Endothelial cell of umbilical vein (primary cell): ENCODE measurements at regions of chr7 and their contacts with region 1.

Region 1: GRCh38 chr7:7103343-7104313 is 78.7 kb upstream of the C1GALT1 start:
- DNase-seq: peak; percentile 70
- H3K4me3 ChIP-seq: peak overlapping the region in 1 of 3 experiments; percentile 8
- H3K27ac ChIP-seq: no peak overlapping the region
- H3K4me1 ChIP-seq: peaks cover 15% of the 10 kb centered on the region
- H3K27me3 ChIP-seq: no peaks in the 10 kb centered on the region
- CTCF ChIP-seq: peak; percentile 45 to 49
- POLR2A ChIP-seq: no peak

Region 2: DNA sequence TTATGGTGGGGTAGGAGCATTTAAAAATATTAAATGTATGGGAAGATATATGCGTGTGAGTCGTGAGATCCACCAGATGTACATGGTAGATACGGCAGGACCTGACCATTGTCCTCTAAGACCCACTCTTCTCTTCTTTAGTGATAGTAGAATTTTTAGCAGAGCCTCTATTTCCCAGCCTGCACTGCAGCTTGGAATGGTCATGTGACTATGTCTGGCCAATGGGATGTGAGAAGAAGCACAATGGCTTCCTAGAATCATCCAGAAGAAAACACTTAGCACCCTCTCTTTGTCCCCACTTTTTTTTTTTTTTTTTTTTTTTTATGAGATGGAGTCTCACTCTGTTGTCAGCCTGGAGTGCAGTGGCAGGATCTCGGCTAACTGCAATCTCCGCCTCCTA is 744.6 kb before region 1 on chr7:
- CTCF ChIA-PET with region 1: no interaction called
- POLR2A ChIA-PET with region 1: no interaction called
- dilution Hi-C with region 1: no loop called
- intact Hi-C with region 1: no loop called
- DNase-seq: no peak
- H3K4me3 ChIP-seq: no peak overlapping the region
- H3K27ac ChIP-seq: no peak overlapping the region
- H3K4me1 ChIP-seq: no peaks in the 10 kb centered on the region
- H3K27me3 ChIP-seq: no peaks in the 10 kb centered on the region
- CTCF ChIP-seq: no peak
- POLR2A ChIP-seq: no peak

Region 3: DNA sequence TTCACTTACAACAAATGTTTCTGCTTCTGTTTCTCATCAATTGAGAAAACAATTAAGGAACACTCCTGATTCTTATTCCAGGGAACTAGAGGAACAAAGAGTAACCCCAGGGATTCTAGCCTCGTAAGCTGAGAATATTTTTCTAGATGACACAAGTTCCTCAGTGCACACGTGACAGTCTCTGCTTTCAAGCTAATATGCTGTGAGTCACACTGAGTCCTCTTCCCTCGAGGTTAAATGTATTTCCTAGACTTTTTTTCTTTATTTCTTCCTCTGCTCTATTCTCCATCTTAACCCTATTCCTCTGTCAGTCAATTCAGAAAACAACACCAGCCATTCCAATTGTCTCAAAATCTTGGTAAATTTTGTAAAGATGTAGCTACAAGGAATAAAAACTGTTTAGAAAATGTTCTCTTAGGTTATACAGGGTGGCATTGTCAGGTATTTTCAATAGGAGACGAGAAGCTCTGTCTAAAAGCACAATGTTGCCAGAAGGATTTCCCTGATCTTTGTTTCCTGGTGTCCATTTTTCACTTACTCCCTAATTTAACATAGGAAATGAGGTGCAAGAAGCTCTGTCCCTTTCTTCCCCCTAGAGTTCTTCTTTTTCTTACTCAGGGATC is 72.9 kb after region 1 on chr7:
- CTCF ChIA-PET with region 1: interaction called, 10 read pairs
- POLR2A ChIA-PET with region 1: interaction called, 4 read pairs
- dilution Hi-C with region 1: no loop called
- intact Hi-C with region 1: no loop called
- DNase-seq: peak; percentile 86
- H3K4me3 ChIP-seq: peak overlapping the region in 1 of 3 experiments; percentile 25
- H3K27ac ChIP-seq: peak overlapping the region; percentile 95
- H3K4me1 ChIP-seq: peaks cover 24% of the 10 kb centered on the region
- H3K27me3 ChIP-seq: no peaks in the 10 kb centered on the region
- CTCF ChIP-seq: no peak
- POLR2A ChIP-seq: no peak

Region 4: DNA sequence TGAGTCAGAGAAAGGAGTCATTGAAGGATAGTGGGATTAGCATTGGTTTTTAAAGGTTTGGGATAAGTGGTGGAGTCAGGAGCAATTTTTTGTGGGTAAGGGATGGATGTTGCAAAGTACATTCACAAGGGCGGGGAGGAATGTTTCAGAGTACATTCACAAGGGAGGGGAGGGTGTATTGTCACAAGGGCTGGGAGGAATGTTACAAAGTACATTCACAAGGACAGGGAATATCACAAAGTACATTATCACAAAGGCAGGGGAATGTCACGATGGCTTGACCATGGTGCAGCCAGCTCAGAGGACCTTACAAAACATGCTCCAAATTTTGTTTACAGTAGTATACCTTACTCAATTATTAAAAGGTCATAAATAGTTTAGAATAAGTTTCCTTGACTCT is 109.0 kb after region 1 on chr7:
- CTCF ChIA-PET with region 1: no interaction called
- POLR2A ChIA-PET with region 1: no interaction called
- dilution Hi-C with region 1: no loop called
- intact Hi-C with region 1: no loop called
- DNase-seq: no peak
- H3K4me3 ChIP-seq: no peak overlapping the region
- H3K27ac ChIP-seq: no peak overlapping the region
- H3K4me1 ChIP-seq: no peaks in the 10 kb centered on the region
- H3K27me3 ChIP-seq: no peaks in the 10 kb centered on the region
- CTCF ChIP-seq: no peak
- POLR2A ChIP-seq: no peak

Region 5: GRCh38 chr7:7347045-7347444 is 243.4 kb after region 1 on chr7:
- CTCF ChIA-PET with region 1: interaction called, 3 read pairs
- POLR2A ChIA-PET with region 1: no interaction called
- dilution Hi-C with region 1: no loop called
- intact Hi-C with region 1: loop called (anchors 5 kb)
- DNase-seq: no peak
- H3K4me3 ChIP-seq: no peak overlapping the region
- H3K27ac ChIP-seq: no peak overlapping the region
- H3K4me1 ChIP-seq: no peaks in the 10 kb centered on the region
- H3K27me3 ChIP-seq: no peaks in the 10 kb centered on the region
- CTCF ChIP-seq: no peak
- POLR2A ChIP-seq: no peak

Region 6: GRCh38 chr7:7424151-7424873 is 320.7 kb after region 1 on chr7:
- CTCF ChIA-PET with region 1: interaction called, 42 read pairs
- POLR2A ChIA-PET with region 1: no interaction called
- dilution Hi-C with region 1: no loop called
- intact Hi-C with region 1: loop called (anchors 1 kb)
- DNase-seq: peak; percentile 67
- H3K4me3 ChIP-seq: peak overlapping the region; percentile 37 to 93 (median 81)
- H3K27ac ChIP-seq: peak overlapping the region; percentile 3
- H3K4me1 ChIP-seq: peaks cover 2% of the 10 kb centered on the region
- H3K27me3 ChIP-seq: peaks cover 0 to 2% of the 10 kb centered on the region in 2 experiments
- CTCF ChIP-seq: peak; percentile 73 to 82
- POLR2A ChIP-seq: no peak

Region 7: GRCh38 chr7:7542251-7542835 is 438.7 kb after region 1 on chr7:
- CTCF ChIA-PET with region 1: interaction called, 9 read pairs
- POLR2A ChIA-PET with region 1: no interaction called
- dilution Hi-C with region 1: no loop called
- intact Hi-C with region 1: loop called (anchors 2 kb)
- DNase-seq: no peak
- H3K4me3 ChIP-seq: no peak overlapping the region
- H3K27ac ChIP-seq: no peak overlapping the region
- H3K4me1 ChIP-seq: no peaks in the 10 kb centered on the region
- H3K27me3 ChIP-seq: no peaks in the 10 kb centered on the region
- CTCF ChIP-seq: no peak
- POLR2A ChIP-seq: no peak